ENCODE measurements at regions of chr12 and their contacts with region 1.

Region 1: GRCh38 chr12:52362118-52362726 is 5.1 kb downstream of the KRT85 start:
- DNase-seq: peak; percentile 31
- ATAC-seq: no peak
- H3K4me3 Mint-ChIP-seq: no peak overlapping the region
- H3K27ac Mint-ChIP-seq: no peak overlapping the region
- H3K4me1 Mint-ChIP-seq: peaks cover 37% of the 10 kb centered on the region
- H3K27me3 Mint-ChIP-seq: peaks cover 14% of the 10 kb centered on the region

Region 2: DNA sequence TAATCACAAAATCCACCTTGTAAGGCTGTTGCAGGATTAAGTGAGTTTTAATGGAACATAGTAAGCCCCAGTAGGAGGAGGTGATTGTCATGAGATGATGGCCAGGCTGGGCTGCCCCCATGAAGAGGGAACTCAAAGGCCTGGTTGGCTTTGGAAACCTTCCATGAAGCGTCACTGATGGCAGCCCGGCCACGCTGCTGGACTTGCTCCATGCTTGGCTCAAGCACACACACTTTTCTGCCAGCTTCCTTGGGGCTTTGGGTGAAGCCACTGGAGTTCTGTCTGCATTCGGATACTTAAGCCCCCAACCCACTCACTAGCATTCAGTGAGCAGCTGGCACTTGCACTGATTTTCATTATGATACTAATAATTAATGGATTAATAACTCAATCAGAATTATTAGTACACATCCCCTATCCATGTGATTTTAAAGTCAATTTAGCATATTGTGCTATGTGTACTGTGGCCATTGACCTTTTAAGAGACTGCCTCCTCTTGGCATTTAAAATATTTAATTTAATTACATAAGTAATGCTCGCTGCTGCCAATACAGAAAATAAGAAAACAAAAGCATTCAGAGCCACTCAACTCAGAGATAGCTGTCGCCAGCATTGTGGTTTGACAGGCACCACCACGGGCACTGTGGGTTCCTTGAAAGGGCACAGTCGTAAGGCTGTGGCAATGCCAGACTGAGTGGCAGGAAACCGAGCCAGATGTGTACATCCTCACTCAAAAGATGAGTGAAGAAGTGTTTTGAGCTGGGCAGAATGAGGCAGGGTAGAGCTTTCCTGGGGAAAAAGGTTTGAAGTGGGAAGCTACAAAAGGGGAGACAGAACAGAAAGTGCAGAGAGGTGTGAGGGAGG is 10.8 kb before region 1 on chr12:
- CTCF ChIA-PET with region 1: interaction called, 21 read pairs
- POLR2A ChIA-PET with region 1: no interaction called
- DNase-seq: peak; percentile 69
- ATAC-seq: peak; percentile 92
- H3K4me3 Mint-ChIP-seq: no peak overlapping the region
- H3K27ac Mint-ChIP-seq: no peak overlapping the region
- H3K4me1 Mint-ChIP-seq: peaks cover 8% of the 10 kb centered on the region
- H3K27me3 Mint-ChIP-seq: peaks cover 45% of the 10 kb centered on the region

Region 3: GRCh38 chr12:52372216-52373154 is 10.3 kb after region 1 on chr12:
- CTCF ChIA-PET with region 1: interaction called, 17 read pairs
- POLR2A ChIA-PET with region 1: interaction called, 3 read pairs
- DNase-seq: peak; percentile 76
- ATAC-seq: peak; percentile 72
- H3K4me3 Mint-ChIP-seq: no peak overlapping the region
- H3K27ac Mint-ChIP-seq: no peak overlapping the region
- H3K4me1 Mint-ChIP-seq: no peaks in the 10 kb centered on the region
- H3K27me3 Mint-ChIP-seq: peaks cover 35% of the 10 kb centered on the region